ENCODE measurements at regions of chr6 and their contacts with region 1.

Region 1: GRCh38 chr6:108294727-108295625 is at the start of gene AFG1L:
- DNase-seq: peak; percentile 81 to 90 (median 88)
- ATAC-seq: peak; percentile 96
- H3K4me3 ChIP-seq: peak within 1 kb of the TSS; percentile 99
- H3K4me3 Mint-ChIP-seq: peak within 1 kb of the TSS; percentile 93 to 99 (median 98)
- H3K27ac ChIP-seq: peak within 1 kb of the TSS; percentile 88
- H3K27ac Mint-ChIP-seq: peak within 1 kb of the TSS; percentile 95 to 100 (median 99)
- H3K4me1 ChIP-seq: peaks cover 10 to 13% of the 10 kb centered on the region in 2 donors
- H3K4me1 Mint-ChIP-seq: peaks cover 11 to 37% (median 26%) of the 10 kb centered on the region in 7 donors
- H3K27me3 ChIP-seq: no peaks in the 10 kb centered on the region
- H3K27me3 Mint-ChIP-seq: peaks cover 0 to 3% (median 0%) of the 10 kb centered on the region in 5 donors
- total RNA-seq, gene AFG1L: 4.1 to 9.2 (median 7.2) TPM

Region 2: GRCh38 chr6:107033126-107033525 is 1261.8 kb before region 1 on chr6:
- CTCF ChIA-PET with region 1: no interaction called
- POLR2A ChIA-PET with region 1: no interaction called
- intact Hi-C with region 1: loop called in 1 of 2 experiments (anchors 1 kb)
- DNase-seq: no peak
- ATAC-seq: no peak
- H3K4me3 ChIP-seq: no peak overlapping the region
- H3K4me3 Mint-ChIP-seq: no peak overlapping the region
- H3K27ac ChIP-seq: no peak overlapping the region
- H3K27ac Mint-ChIP-seq: peak overlapping the region in 1 of 9 donors; percentile 24
- H3K4me1 ChIP-seq: peaks cover 3 to 17% of the 10 kb centered on the region in 2 donors
- H3K4me1 Mint-ChIP-seq: peaks cover 22 to 56% (median 46%) of the 10 kb centered on the region in 7 donors
- H3K27me3 ChIP-seq: no peaks in the 10 kb centered on the region
- H3K27me3 Mint-ChIP-seq: no peaks in the 10 kb centered on the region

Region 3: DNA sequence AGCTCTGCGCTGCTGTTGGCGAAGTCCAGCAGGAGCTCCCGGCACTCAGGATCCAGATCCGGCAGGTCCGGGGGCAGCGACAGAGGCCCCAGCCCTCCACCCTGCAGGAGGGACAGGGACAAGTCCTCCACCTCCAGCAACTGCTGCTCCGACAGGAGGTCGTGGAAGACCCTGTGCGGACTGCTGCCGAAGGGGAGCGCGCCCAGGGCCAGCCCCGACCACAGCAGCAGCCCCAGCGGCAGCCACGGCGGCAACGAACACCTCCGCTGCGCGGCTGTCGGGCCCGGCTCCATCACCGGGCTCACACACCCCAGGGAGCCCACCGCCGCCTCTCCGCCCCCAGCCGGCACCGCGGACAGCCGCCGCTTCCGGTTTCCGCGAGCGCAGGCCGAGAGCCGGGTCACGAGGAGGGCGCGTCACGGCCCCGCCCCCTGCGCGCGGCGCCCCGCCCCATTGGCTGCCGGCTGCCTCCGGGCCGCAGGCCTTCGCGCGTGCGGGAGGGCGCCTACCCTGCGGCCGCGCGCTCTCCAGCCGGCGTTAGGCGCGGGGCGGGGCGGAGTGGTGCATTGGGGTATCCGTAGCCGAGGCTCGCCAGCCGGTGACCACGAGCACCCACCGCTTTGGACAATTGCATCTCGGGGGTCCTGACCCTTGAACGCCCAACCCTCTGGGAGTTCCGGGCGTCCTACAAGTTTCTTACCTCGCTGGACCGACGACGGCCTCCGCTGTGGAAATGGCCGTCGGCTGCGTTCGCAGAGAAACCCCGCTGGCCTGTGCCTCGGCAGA is 220.4 kb before region 1 on chr6 and contains the start of gene OSTM1:
- CTCF ChIA-PET with region 1: no interaction called
- POLR2A ChIA-PET with region 1: no interaction called
- intact Hi-C with region 1: loop called (anchors 1 to 2 kb)
- DNase-seq: peak; percentile 88 to 98 (median 94)
- ATAC-seq: peak; percentile 99
- H3K4me3 ChIP-seq: peak within 1 kb of the TSS; percentile 99
- H3K4me3 Mint-ChIP-seq: peak within 1 kb of the TSS; percentile 84 to 94 (median 90)
- H3K27ac ChIP-seq: peak within 1 kb of the TSS; percentile 89
- H3K27ac Mint-ChIP-seq: peak within 1 kb of the TSS; percentile 81 to 98 (median 91)
- H3K4me1 ChIP-seq: peaks cover 18% of the 10 kb centered on the region in 2 donors
- H3K4me1 Mint-ChIP-seq: peaks cover 11 to 35% (median 23%) of the 10 kb centered on the region in 7 donors
- H3K27me3 ChIP-seq: no peaks in the 10 kb centered on the region
- H3K27me3 Mint-ChIP-seq: peaks cover 0 to 25% (median 4%) of the 10 kb centered on the region in 5 donors
- total RNA-seq, gene OSTM1: 25.0 to 48.9 (median 36.7) TPM

Region 4: DNA sequence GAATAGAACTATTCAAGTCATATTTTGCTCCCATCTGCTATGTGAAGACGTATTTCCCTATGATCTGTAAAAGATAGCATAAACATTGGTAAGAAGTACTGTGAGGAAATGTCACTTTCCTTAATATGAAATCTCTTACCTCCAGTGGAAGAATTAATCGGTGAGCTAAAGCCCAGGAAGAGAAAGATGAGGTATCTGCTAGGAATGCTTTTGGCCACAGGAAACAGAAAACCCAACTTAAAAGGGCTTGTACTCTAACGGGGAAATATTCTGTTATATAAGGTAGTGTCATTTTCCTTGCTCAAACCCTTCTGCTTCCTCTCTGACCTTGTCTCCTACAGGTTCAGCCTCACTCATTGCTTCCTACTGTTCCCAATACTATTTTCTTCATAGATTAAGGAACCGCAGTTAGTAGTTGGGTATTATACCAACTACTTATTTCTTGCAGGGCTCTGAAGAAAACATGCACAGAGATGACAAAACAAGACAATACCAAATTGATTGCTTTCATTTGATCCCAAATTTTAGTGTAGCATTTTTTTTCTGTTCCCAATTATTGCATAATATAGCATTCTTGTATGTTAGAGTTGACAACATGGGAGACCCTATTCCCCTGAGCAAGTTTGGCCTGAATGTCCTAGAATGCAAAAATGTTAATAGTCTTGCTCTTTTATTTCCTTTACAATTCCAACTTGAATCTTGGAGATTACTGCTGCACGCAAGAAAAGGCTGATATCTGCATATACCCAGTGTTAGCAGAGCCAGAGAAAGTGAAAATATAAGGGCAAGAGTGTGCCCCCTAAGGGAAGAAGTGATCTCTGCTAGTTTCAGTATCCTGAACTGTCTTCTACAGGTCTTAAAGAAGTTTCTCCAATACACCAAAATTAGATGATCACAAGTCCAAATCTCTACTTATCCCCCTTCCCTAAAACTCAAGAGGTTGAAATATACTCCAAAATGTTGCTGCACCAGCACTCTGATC is 65.2 kb after region 1 on chr6:
- CTCF ChIA-PET with region 1: no interaction called
- POLR2A ChIA-PET with region 1: no interaction called
- intact Hi-C with region 1: loop called in 1 of 2 experiments (anchors 5 kb)
- DNase-seq: no peak
- ATAC-seq: no peak
- H3K4me3 ChIP-seq: no peak overlapping the region
- H3K4me3 Mint-ChIP-seq: no peak overlapping the region
- H3K27ac ChIP-seq: no peak overlapping the region
- H3K27ac Mint-ChIP-seq: no peak overlapping the region
- H3K4me1 ChIP-seq: no peaks in the 10 kb centered on the region
- H3K4me1 Mint-ChIP-seq: peaks cover 0 to 13% (median 0%) of the 10 kb centered on the region in 7 donors
- H3K27me3 ChIP-seq: no peaks in the 10 kb centered on the region
- H3K27me3 Mint-ChIP-seq: no peaks in the 10 kb centered on the region

Region 5: GRCh38 chr6:109440331-109441068 is 1145.5 kb after region 1 on chr6 and contains the starts of genes PPIL6 and SMPD2:
- CTCF ChIA-PET with region 1: no interaction called
- POLR2A ChIA-PET with region 1: no interaction called
- intact Hi-C with region 1: loop called in 1 of 2 experiments (anchors 2 kb)
- DNase-seq: peak; percentile 63 to 85 (median 77)
- ATAC-seq: peak; percentile 91
- H3K4me3 ChIP-seq: peak within 1 kb of the TSS; percentile 65
- H3K4me3 Mint-ChIP-seq: peak within 1 kb of the TSS; percentile 90 to 95 (median 94)
- H3K27ac ChIP-seq: peak within 1 kb of the TSS; percentile 98
- H3K27ac Mint-ChIP-seq: peak within 1 kb of the TSS; percentile 87 to 97 (median 93)
- H3K4me1 ChIP-seq: peaks cover 11% of the 10 kb centered on the region in 2 donors
- H3K4me1 Mint-ChIP-seq: peaks cover 10 to 32% (median 21%) of the 10 kb centered on the region in 7 donors
- H3K27me3 ChIP-seq: no peaks in the 10 kb centered on the region
- H3K27me3 Mint-ChIP-seq: peaks cover 0 to 2% (median 0%) of the 10 kb centered on the region in 5 donors
- total RNA-seq, gene PPIL6: 0.13 to 1.9 (median 0.40) TPM in 4 of 5 experiments, not detected in the other
- total RNA-seq, gene SMPD2: 16.9 to 33.7 (median 19.6) TPM